ENCODE measurements at regions of chr3 and their contacts with region 1.

Region 1: DNA sequence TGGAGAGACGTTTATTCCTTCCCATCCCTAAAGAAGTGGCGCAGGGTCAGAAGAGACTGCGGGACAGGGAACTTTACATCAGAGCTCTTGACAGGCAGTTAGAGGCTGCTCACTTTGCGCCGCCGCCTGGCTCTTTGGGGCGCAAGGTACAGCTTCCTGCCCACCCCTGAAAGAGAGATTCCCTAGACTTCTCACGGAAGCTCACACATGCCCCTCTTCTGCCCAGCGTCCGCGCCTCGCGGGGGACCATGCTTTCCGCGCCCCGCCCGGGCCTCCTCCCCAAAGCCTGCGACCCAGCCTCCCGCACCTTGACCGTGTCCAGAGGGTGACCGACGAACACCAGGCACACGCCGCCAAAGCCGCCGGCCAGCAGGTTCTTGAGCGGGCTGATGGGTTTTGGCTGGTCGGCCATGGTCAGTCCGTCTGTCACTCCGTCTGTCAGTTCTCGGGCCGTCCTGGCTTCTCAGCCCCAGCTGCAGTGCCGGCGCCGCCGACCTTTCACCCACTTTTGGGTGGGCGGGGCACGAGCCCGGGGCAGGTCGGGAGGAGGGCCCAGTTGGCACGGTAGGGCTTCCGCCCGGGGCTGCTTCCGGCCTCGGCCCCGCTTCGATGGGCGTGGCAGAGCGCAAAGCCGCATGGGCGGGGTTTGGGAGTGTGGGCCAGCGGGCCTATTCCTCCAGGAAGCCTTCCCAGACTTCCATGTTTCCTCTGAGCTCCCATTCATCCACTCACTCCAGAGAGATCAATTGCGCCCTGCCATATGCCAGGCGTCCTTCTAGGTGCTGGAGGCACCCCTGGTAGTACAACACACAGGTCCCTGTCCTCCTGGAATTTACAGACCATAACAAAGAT is at the start of gene SLC25A20:
- DNase-seq: peak; percentile 99
- H3K4me3 ChIP-seq: peak within 1 kb of the TSS; percentile 76 to 97 (median 88)
- H3K27ac ChIP-seq: peak within 1 kb of the TSS; percentile 45 to 92 (median 89)
- H3K4me1 ChIP-seq: peaks cover 8 to 46% (median 36%) of the 10 kb centered on the region in 6 donors
- H3K27me3 ChIP-seq: no peaks in the 10 kb centered on the region
- CTCF ChIP-seq: peak in 5 of 11 experiments; percentile 7 to 43 (median 27)
- POLR2A ChIP-seq: no peak
- total RNA-seq, gene SLC25A20: 13.0 to 51.2 (median 26.8) TPM

Region 2: DNA sequence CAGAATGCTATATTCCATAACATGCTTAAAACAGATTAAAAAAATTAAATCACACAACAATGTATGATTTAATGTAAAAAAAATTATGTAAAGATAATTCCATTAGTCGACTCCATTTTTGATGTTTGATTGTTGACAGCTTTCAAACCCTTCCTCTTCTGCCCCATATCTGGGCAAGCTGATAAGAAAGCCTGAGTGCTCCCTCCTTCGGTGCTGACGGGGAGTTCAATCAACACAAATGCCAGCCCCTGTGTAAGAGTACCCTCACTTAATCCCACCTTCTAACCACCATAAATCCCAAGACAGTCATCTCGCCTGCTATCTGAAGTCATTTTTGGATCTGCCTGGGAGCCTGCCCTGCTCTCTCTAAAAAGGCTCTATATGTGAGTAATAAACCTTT is 121.8 kb before region 1 on chr3:
- intact Hi-C with region 1: no loop called
- DNase-seq: no peak
- H3K4me3 ChIP-seq: no peak overlapping the region
- H3K27ac ChIP-seq: no peak overlapping the region
- H3K4me1 ChIP-seq: no peaks in the 10 kb centered on the region
- H3K27me3 ChIP-seq: no peaks in the 10 kb centered on the region
- CTCF ChIP-seq: no peak
- POLR2A ChIP-seq: no peak

Region 3: DNA sequence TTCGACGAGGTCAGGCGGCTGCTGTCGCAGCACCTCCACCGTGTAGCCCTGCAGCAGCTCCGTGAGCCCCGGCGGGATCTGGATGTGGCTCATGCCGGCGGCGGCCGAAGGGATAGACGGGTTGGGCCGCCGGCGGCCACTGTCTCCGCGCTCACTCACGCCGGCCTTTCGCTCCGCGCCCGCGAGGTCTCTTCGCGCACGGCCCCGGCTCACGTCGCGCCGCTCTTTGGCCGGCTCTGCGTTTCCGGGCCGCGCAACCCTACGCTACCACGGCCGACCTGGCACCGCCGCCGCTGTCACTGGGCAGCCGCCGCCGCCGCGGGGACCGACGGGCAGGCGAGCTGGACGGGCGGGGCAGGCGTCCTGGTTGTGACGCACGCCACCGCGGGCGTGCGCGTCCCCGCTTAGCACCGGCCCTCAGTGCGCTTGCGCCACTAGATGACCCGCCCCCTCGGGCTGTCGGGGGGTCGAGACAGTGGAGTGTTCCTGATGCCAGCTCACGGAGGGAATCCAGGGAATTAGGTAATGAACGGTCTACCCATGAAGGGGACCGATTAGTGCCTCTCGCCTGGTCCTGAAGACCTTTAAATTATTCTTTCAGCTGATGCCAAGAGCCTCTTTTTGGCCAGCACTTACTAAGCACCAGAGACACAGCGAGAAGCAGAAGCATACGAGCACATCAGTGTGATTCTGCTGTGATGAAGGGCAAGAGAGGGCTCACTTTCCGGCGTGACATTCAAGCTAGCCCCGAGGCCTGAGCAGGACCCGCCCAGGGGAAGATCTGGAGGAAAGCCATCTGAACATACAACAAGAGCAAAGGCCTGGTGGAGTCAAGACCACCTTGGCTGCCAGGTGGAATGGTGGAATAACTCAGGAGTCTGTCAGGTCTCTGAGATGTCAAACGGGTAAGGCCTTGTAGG is 50.8 kb before region 1 on chr3 and contains the start of gene PRKAR2A:
- intact Hi-C with region 1: loop called (anchors 10 kb)
- DNase-seq: peak; percentile 98
- H3K4me3 ChIP-seq: peak within 1 kb of the TSS; percentile 64 to 97 (median 87)
- H3K27ac ChIP-seq: peak within 1 kb of the TSS; percentile 79 to 98 (median 96)
- H3K4me1 ChIP-seq: peaks cover 18 to 35% (median 32%) of the 10 kb centered on the region in 6 donors
- H3K27me3 ChIP-seq: no peaks in the 10 kb centered on the region
- CTCF ChIP-seq: peak in 3 of 11 experiments; percentile 13 to 27 (median 15)
- POLR2A ChIP-seq: peak; percentile 33 to 71 (median 67)
- total RNA-seq, gene PRKAR2A: 15.3 to 38.5 (median 26.3) TPM

Region 4: DNA sequence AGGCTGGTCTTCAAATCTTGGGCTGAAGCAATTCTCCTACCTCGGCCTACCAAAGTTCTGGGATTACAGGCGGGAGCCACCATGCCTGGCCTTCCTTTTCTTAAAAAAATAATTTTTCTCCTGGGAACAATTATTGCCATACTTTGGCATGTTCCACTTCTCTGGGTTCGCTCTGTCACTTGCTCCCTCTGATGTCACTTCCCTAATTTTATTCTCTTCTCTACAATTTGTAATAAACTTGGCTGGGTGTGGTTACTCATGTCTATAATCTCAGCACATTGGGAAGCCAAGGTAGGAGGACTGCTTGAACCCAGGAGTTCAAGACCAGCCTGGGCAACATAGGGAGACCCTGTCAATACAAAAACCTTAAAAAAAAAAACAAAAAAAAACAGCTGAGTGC is 136.7 kb after region 1 on chr3:
- intact Hi-C with region 1: no loop called
- DNase-seq: no peak
- H3K4me3 ChIP-seq: no peak overlapping the region
- H3K27ac ChIP-seq: peak overlapping the region in 2 of 8 donors; percentile 4 to 32
- H3K4me1 ChIP-seq: peaks cover 0 to 10% (median 0%) of the 10 kb centered on the region in 6 donors
- H3K27me3 ChIP-seq: no peaks in the 10 kb centered on the region
- CTCF ChIP-seq: no peak
- POLR2A ChIP-seq: no peak

Measured in spleen (tissue), 13 donors.